Endothelial cell of umbilical vein (primary cell): ENCODE measurements at regions of chr1 and their contacts with region 1.

Region 1: GRCh38 chr1:93552741-93553455 is 105.0 kb downstream of the FNBP1L start:
- DNase-seq: peak; percentile 70
- H3K4me3 ChIP-seq: no peak overlapping the region
- H3K27ac ChIP-seq: peak overlapping the region; percentile 34
- H3K4me1 ChIP-seq: peaks cover 58% of the 10 kb centered on the region
- H3K27me3 ChIP-seq: no peaks in the 10 kb centered on the region
- CTCF ChIP-seq: no peak
- POLR2A ChIP-seq: no peak

Region 2: DNA sequence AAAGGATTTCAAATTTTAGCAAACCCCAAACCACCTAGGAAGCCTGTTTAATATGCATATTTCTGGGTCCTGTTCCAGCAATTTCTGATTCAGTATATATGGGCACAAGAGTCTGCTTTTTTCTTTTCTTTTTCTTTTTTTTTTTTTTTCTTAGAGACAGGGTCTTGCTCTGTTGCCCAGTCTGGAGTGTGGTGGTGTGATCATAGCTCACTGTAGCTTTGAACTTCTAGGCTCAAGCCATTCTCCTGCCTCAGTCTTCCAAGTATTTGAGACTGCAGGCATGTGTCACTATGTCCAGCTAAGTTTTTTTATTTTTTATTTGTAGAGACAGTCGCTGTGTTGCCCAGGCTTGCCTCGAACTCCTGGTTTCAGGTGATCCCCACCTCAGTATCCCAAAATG is 337.6 kb before region 1 on chr1:
- CTCF ChIA-PET with region 1: no interaction called
- POLR2A ChIA-PET with region 1: no interaction called
- dilution Hi-C with region 1: no loop called
- intact Hi-C with region 1: no loop called
- DNase-seq: no peak
- H3K4me3 ChIP-seq: no peak overlapping the region
- H3K27ac ChIP-seq: no peak overlapping the region
- H3K4me1 ChIP-seq: no peaks in the 10 kb centered on the region
- H3K27me3 ChIP-seq: no peaks in the 10 kb centered on the region
- CTCF ChIP-seq: no peak
- POLR2A ChIP-seq: no peak

Region 3: GRCh38 chr1:93345633-93346420 is 207.1 kb before region 1 on chr1 and contains the start of gene DR1:
- CTCF ChIA-PET with region 1: no interaction called
- POLR2A ChIA-PET with region 1: no interaction called
- dilution Hi-C with region 1: no loop called
- intact Hi-C with region 1: loop called (anchors 1 kb)
- DNase-seq: peak; percentile 94
- H3K4me3 ChIP-seq: peak within 1 kb of the TSS; percentile 89 to 99 (median 97)
- H3K27ac ChIP-seq: peak within 1 kb of the TSS; percentile 88
- H3K4me1 ChIP-seq: peaks cover 22% of the 10 kb centered on the region
- H3K27me3 ChIP-seq: no peaks in the 10 kb centered on the region
- CTCF ChIP-seq: no peak
- POLR2A ChIP-seq: peak; percentile 93
- total RNA-seq, gene DR1: 49.4 and 52.2 TPM in 2 replicates

Region 4: GRCh38 chr1:93447516-93448291 is 105.2 kb before region 1 on chr1 and contains the start of gene FNBP1L:
- CTCF ChIA-PET with region 1: interaction called, 11 read pairs
- POLR2A ChIA-PET with region 1: interaction called, 4 read pairs
- dilution Hi-C with region 1: no loop called
- intact Hi-C with region 1: loop called (anchors 1 kb)
- DNase-seq: peak; percentile 78
- H3K4me3 ChIP-seq: peak within 1 kb of the TSS; percentile 14 to 80 (median 70)
- H3K27ac ChIP-seq: peak within 1 kb of the TSS; percentile 65
- H3K4me1 ChIP-seq: peaks cover 13% of the 10 kb centered on the region
- H3K27me3 ChIP-seq: no peaks in the 10 kb centered on the region
- CTCF ChIP-seq: no peak
- POLR2A ChIP-seq: peak; percentile 85
- total RNA-seq, gene FNBP1L: 56.4 and 56.5 TPM in 2 replicates

Region 5: GRCh38 chr1:93542398-93542797 is 10.5 kb before region 1 on chr1:
- CTCF ChIA-PET with region 1: interaction called, 10 read pairs
- POLR2A ChIA-PET with region 1: no interaction called
- dilution Hi-C with region 1: no loop called
- intact Hi-C with region 1: no loop called
- DNase-seq: no peak
- H3K4me3 ChIP-seq: no peak overlapping the region
- H3K27ac ChIP-seq: no peak overlapping the region
- H3K4me1 ChIP-seq: no peaks in the 10 kb centered on the region
- H3K27me3 ChIP-seq: no peaks in the 10 kb centered on the region
- CTCF ChIP-seq: no peak
- POLR2A ChIP-seq: no peak

Region 6: GRCh38 chr1:93567255-93567918 is 14.5 kb after region 1 on chr1:
- CTCF ChIA-PET with region 1: interaction called, 5 read pairs
- POLR2A ChIA-PET with region 1: no interaction called
- dilution Hi-C with region 1: no loop called
- intact Hi-C with region 1: loop called (anchors 1 kb)
- DNase-seq: peak; percentile 81
- H3K4me3 ChIP-seq: no peak overlapping the region
- H3K27ac ChIP-seq: peak overlapping the region; percentile 34
- H3K4me1 ChIP-seq: peaks cover 24% of the 10 kb centered on the region
- H3K27me3 ChIP-seq: no peaks in the 10 kb centered on the region
- CTCF ChIP-seq: no peak
- POLR2A ChIP-seq: no peak